Right cardiac atrium (tissue), 5 donors: ENCODE measurements at regions of chr4 and their contacts with region 1.

Region 1: DNA sequence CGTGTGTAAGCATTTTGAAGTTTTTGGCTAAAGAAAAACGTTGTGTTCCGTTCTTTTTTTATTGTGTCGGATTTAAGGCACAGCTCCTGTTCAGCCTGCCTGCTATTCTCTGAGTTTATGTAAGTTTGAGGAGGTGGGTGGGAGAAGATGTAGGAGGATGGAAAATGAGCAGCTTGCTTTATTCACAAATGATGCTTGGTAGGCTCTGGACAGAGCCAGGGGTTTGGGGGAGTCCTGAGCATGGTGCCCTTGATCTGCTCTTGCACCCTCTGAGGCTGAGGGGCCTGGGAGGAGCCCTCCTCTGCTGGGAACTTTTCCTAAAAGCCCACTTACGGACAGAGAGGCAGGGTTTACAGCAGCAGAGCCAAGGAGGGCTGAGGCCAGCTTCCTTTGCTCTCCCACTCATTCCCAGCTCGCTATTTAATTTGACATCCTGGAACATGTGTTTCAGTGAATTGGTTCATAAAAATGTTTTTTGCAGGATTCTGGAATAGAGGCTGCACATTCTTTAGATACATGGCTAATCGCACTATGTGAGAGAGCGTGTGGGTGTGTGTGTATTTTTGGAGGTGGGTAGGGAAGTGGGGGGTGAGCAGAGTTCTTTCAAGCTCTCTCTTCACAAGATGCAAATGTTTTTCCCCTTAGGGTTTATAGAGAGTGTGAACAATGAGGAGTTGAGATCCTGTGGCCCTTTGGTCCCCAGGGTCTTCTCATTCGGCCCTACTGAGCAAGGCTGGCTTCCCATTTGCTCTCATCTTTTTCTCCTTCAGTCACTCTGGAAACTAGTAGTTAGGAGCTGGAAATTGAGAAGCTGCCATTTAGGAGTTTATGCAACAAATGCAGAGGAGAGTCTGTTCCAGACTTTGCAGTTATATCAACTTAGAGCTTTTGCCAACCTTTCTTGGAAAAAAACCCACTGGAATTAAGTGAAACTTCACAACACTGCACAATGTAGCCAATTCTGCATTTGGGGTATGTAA is 32.1 kb downstream of the TMEM131L start:
- DNase-seq: peak in 1 of 3 donors; percentile 52
- ATAC-seq: peak; percentile 54 to 84
- H3K4me3 ChIP-seq: no peak overlapping the region
- H3K27ac ChIP-seq: peak overlapping the region; percentile 57
- H3K4me1 ChIP-seq: peaks cover 2% of the 10 kb centered on the region
- H3K27me3 ChIP-seq: no peaks in the 10 kb centered on the region

Region 2: GRCh38 chr4:153555730-153556433 is 57.6 kb after region 1 on chr4:
- intact Hi-C with region 1: loop called in 1 of 4 experiments (anchors 5 kb)
- DNase-seq: peak; percentile 91 to 96 (median 93)
- ATAC-seq: peak; percentile 93 to 96
- H3K4me3 ChIP-seq: no peak overlapping the region
- H3K27ac ChIP-seq: no peak overlapping the region
- H3K4me1 ChIP-seq: peaks cover 3% of the 10 kb centered on the region
- H3K27me3 ChIP-seq: no peaks in the 10 kb centered on the region

Region 3: DNA sequence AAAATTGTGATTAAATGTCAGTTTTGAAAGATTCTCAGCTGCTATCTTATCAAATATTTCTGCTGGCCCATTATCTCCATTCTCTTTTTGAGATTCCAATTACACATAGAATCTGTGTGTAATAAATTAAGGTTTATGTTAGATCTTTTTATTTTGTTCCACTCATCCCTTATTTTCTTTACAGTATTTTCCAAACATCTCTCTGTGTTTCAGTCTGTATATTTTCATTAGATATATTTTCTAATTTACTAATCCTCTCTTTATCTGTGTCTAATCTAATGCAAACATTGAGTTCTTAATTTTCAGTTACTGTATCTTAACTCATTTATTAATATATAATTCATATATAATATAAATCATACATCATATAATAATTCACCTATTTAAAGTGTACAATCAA is 724.6 kb after region 1 on chr4:
- intact Hi-C with region 1: no loop called
- DNase-seq: no peak
- ATAC-seq: no peak
- H3K4me3 ChIP-seq: no peak overlapping the region
- H3K27ac ChIP-seq: no peak overlapping the region
- H3K4me1 ChIP-seq: no peaks in the 10 kb centered on the region
- H3K27me3 ChIP-seq: no peaks in the 10 kb centered on the region